Activated CD8-positive, alpha-beta T cell treated with anti-CD3 and anti-CD28 coated beads for 36 hours (primary cell): ENCODE measurements at regions of chr16 and their contacts with region 1.

Region 1: DNA sequence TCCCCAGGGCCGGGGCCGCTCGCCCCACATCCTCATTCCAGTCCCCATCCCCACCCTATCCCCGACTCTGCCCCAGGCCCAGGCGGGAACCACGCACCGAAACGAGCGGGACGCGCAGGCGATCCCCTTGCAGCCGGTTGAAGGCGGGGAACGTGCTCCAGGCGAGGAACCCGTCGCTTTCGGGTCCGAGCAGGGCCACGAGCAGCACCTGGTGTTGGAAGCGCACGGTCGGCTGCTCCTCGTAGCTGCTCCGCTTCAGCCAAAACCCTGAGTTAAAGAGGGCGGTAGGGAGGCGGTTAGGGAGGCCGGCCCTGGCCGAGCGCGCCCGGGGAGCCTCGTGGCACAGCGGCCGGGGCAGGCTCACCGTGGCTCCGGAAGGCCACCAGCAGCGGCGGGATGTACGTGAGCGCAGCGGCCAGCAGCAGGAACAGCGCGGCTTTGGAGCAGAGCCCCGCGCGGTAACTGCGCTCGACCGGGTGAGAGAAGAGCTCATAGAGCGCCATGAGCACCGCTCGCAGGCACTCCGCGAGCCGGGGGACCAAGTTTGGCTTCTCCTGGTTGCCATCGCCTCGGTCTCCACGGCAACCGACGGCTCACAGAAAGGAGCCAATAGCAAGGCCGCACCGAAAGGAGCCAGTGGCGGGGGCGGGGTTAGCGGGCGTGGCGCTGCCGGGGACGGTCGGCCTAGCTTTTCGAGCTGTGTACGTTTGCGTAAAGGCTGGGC is at the start of gene TMEM231:
- DNase-seq: peak; percentile 99
- ATAC-seq: peak; percentile 97
- H3K4me3 Mint-ChIP-seq: peak within 1 kb of the TSS; percentile 85
- H3K27ac Mint-ChIP-seq: peak within 1 kb of the TSS; percentile 77
- H3K4me1 Mint-ChIP-seq: peaks cover 4% of the 10 kb centered on the region
- H3K27me3 Mint-ChIP-seq: peaks cover 6% of the 10 kb centered on the region
- CTCF ChIP-seq: no peak
- total RNA-seq, gene TMEM231: 4.9 to 5.1 TPM

Region 2: DNA sequence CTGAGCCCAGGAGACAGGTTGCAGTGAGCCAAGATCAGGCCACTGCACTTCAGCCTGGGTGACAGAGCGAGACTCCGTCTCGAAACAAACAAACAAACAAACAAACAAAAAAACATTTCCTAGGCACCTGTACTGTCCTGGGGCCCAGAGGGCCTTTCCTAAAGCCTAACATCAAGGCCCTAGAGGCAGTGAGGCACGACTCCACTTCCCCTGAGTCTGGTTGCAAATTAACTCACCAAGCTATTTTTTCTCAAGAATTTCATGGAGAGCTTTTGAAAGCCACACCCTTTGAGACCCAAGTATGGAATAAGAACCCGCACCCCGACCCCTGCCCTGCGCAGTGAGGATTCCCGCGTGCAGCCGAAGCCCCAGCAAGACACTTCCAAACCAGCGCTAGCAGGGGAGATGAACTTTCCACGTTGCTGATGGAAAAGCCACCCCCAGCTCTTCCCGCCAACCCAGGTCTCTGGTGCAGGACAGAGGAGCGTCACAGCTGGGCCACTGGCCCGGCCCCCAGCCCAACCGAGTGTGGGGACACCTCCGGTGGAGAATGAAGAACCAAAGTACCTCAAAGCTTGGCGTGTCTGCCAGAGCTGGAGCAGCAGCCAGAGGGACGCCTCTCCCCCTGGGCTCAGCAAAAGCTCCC is 21.2 kb before region 1 on chr16:
- CTCF ChIA-PET with region 1: no interaction called
- POLR2A ChIA-PET with region 1: no interaction called
- intact Hi-C with region 1: no loop called
- DNase-seq: no peak
- ATAC-seq: no peak
- H3K4me3 Mint-ChIP-seq: no peak overlapping the region
- H3K27ac Mint-ChIP-seq: no peak overlapping the region
- H3K4me1 Mint-ChIP-seq: no peaks in the 10 kb centered on the region
- H3K27me3 Mint-ChIP-seq: no peaks in the 10 kb centered on the region
- CTCF ChIP-seq: no peak

Region 3: DNA sequence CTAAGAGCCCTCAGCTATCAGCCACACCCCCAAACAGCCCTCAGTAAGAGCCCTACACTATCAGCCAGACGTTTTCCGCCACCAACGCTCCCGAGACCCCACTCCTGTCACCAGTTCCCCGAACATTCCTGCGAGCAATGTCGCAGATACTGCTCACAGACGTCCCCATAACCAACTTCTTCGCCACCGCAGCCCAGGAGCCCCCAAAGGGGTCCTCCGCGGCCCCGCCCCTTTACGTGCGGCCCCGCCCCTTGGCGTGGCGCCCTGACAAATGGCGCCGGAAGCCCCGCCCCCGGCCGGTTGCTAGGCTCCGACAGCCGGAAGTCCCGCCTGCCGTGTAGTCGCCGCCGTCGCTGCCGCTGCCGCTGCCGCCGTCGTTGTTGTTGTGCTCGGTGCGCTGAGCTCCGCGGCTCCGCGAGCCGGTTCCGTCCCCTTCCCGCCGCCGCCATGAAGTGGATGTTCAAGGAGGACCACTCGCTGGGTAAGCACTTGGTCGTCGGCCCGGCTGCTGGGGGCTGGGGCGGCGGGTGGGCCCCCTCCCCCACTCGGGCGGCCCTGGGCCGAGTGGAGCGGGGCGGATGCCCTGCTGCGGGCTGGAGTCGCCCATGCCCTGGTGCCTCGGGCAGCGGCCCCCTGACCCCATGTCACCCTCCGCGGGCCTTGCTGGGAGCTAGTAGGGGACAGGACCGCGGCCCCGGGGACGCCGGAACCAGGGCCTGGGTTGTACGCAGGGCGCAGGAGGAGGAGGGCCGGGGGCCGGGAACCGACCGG is 10.4 kb after region 1 on chr16 and contains the start of gene GABARAPL2:
- CTCF ChIA-PET with region 1: interaction called, 7 read pairs
- POLR2A ChIA-PET with region 1: interaction called, 19 read pairs
- intact Hi-C with region 1: no loop called
- DNase-seq: peak; percentile 92
- ATAC-seq: peak; percentile 78
- H3K4me3 Mint-ChIP-seq: peak within 1 kb of the TSS; percentile 93
- H3K27ac Mint-ChIP-seq: peak within 1 kb of the TSS; percentile 98
- H3K4me1 Mint-ChIP-seq: peaks cover 31% of the 10 kb centered on the region
- H3K27me3 Mint-ChIP-seq: peaks cover 7% of the 10 kb centered on the region
- CTCF ChIP-seq: no peak
- total RNA-seq, gene GABARAPL2: 56.3 to 57.4 TPM